Activated CD4-positive, alpha-beta memory T cell treated with anti-CD3 and anti-CD28 coated beads, Interleukin-2, amount 10 ng/mL, durations not matched to agents 7 days and 5 days (primary cell): ENCODE measurements at regions of chr9 and their contacts with region 1.

Region 1: DNA sequence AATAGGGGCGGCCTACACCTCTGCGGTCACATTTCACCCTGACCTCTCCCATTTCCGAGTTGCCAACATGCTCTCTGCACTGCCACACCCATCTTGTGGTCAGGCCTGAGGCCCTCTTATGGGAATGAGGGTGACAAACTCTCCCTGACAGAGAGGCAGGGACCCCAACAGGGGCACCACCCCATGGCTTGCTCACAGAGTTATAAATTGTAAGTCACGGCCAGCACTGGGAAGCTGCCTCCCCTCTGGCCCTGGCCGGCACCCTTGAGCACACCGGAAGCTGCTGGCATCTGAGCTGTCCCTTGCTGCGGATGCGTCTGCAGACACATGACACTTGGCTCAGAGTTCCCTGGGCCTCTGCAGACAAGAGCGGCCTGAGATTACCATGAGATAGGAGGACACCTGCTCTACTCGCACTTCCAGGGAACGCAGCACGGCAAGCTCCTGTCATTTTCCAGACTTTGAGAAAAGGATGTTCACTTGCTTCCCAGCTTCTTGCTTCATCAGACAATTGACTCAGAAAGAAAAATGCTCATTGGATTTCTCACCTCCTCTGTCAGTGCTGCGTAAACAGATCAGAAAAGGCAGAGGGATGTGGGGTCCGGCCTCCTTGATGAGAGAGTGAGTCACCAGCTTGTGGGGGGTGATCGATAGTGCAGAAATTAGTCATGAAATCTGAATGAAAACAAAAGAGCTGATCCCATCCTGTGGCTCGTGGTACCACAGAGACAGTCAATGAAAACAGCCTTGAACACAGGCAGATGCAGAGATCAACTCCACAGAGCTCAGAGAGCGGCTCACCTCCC is 269.8 kb downstream of the SYK start:
- DNase-seq: peak; percentile 83
- H3K4me3 Mint-ChIP-seq: peak overlapping the region; percentile 31
- H3K27ac Mint-ChIP-seq: peak overlapping the region; percentile 77
- H3K4me1 Mint-ChIP-seq: peaks cover 33% of the 10 kb centered on the region
- H3K27me3 Mint-ChIP-seq: no peaks in the 10 kb centered on the region

Region 2: GRCh38 chr9:91036826-91037510 is 34.4 kb before region 1 on chr9:
- CTCF ChIA-PET with region 1: interaction called, 5 read pairs
- POLR2A ChIA-PET with region 1: interaction called, 12 read pairs
- DNase-seq: peak; percentile 85
- H3K4me3 Mint-ChIP-seq: peak overlapping the region; percentile 31
- H3K27ac Mint-ChIP-seq: peak overlapping the region; percentile 74
- H3K4me1 Mint-ChIP-seq: peaks cover 65% of the 10 kb centered on the region
- H3K27me3 Mint-ChIP-seq: no peaks in the 10 kb centered on the region

Region 3: DNA sequence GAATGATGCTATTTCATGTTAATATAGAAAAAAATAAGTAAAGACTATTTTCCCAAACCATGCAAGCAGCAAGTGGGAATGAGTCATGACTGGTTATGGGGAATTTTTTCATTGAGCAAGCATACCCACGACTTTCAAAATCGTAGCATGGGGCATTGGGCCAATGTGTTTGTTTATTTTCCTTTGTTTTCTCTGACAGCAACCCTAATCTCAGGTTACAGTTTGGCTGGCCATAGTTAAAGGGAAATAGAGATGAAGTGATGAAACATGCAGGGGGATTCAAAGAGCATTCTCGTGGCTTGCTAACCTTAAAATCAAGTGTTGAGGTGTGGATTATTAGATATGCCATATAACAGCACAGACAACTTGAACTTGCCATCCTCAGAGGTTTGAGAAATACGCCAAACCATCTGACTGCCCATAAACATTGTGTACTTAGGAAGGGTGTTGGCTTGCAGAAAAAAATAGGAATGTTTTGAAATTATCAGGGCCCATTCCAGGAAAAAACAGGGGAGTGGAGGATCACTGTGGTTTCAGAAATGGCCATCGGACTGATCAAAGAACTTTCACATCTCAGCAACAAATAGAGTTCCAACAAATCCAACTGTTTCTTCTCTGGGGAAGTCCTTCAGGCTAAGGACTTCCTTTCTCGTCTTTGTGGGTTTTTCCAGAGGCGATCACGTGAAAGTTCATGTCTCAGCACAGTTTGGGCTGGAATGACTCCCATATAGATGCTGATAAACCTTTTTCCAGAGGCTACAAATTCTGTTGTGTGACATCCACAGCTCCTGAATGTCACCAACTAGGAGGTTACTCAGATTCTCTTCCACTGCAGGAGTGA is 10.7 kb before region 1 on chr9:
- CTCF ChIA-PET with region 1: interaction called, 3 read pairs
- POLR2A ChIA-PET with region 1: interaction called, 10 read pairs
- DNase-seq: no peak
- H3K4me3 Mint-ChIP-seq: no peak overlapping the region
- H3K27ac Mint-ChIP-seq: no peak overlapping the region
- H3K4me1 Mint-ChIP-seq: peaks cover 23% of the 10 kb centered on the region
- H3K27me3 Mint-ChIP-seq: no peaks in the 10 kb centered on the region

Region 4: DNA sequence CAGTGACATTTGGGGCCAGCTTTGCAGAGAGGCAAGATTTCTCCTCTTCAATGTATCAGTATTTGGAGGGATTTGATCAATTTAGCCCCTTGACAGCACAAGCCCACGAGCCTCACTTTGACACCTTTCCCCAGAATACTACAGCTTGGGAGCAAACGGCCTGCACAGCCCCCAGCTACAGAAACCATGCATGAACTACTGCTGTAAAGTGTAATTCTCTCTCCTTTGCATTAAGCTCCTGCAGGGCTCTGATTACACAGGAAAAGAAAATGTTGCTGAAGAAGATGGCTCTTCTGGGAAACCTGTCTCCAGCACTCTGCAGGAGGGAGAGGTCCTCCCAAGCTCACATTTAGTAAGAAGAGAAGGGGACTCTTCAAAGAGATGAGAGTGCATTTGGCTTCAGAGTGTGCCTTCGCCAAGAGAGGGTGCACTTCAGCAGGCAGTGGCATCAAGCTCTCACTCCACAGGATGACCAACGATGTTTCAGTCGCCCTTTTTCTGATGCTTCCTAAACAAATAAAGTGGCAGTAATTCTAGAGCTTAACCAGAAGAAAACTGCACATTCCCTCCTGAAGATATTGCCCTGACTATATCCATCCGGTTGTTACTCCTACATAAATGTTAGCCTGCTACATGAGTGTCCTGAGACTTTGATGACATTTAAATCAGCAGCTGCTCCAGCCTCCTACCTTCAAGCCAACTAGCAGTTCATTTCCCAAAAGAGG is 18.2 kb after region 1 on chr9:
- CTCF ChIA-PET with region 1: interaction called, 3 read pairs
- POLR2A ChIA-PET with region 1: interaction called, 15 read pairs
- DNase-seq: peak; percentile 33
- H3K4me3 Mint-ChIP-seq: no peak overlapping the region
- H3K27ac Mint-ChIP-seq: peak overlapping the region; percentile 16
- H3K4me1 Mint-ChIP-seq: peaks cover 48% of the 10 kb centered on the region
- H3K27me3 Mint-ChIP-seq: no peaks in the 10 kb centered on the region

Region 5: GRCh38 chr9:91131433-91131839 is 60.0 kb after region 1 on chr9:
- CTCF ChIA-PET with region 1: no interaction called
- POLR2A ChIA-PET with region 1: interaction called, 16 read pairs
- DNase-seq: peak; percentile 90
- H3K4me3 Mint-ChIP-seq: peak overlapping the region; percentile 62
- H3K27ac Mint-ChIP-seq: peak overlapping the region; percentile 99
- H3K4me1 Mint-ChIP-seq: peaks cover 61% of the 10 kb centered on the region
- H3K27me3 Mint-ChIP-seq: no peaks in the 10 kb centered on the region

Region 6: DNA sequence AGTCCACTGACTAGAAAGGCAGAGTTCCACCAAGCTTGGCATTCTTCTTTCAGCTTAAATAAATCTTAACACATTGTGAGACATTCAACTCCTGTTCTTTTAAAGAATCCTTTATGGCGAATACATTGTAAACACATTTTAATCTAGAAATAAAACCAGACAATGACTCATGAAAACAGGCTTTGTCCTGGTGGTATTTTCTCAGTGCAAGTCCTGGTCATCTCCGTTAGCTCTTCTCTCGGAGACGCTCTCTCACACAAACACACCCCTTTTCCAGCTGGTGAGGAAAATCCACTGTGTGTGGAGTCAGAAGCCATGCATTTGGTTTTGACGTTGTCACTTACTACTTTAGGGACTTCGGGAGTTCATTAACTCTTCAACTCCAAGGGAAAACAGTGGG is 149.9 kb after region 1 on chr9:
- CTCF ChIA-PET with region 1: no interaction called
- POLR2A ChIA-PET with region 1: no interaction called
- DNase-seq: no peak
- H3K4me3 Mint-ChIP-seq: no peak overlapping the region
- H3K27ac Mint-ChIP-seq: no peak overlapping the region
- H3K4me1 Mint-ChIP-seq: peaks cover 7% of the 10 kb centered on the region
- H3K27me3 Mint-ChIP-seq: no peaks in the 10 kb centered on the region